ENCODE measurements at regions of chr1 and their contacts with region 1.

Region 1: GRCh38 chr1:229514578-229515275 is 6.6 kb upstream of the NUP133 start:
- DNase-seq: peak; percentile 35 to 85 (median 52)
- ATAC-seq: peak; percentile 100
- H3K4me3 ChIP-seq: no peak overlapping the region
- H3K4me3 Mint-ChIP-seq: no peak overlapping the region
- H3K27ac ChIP-seq: no peak overlapping the region
- H3K27ac Mint-ChIP-seq: peak overlapping the region; percentile 45
- H3K4me1 ChIP-seq: no peaks in the 10 kb centered on the region
- H3K4me1 Mint-ChIP-seq: peaks cover 7% of the 10 kb centered on the region
- H3K27me3 ChIP-seq: no peaks in the 10 kb centered on the region
- H3K27me3 Mint-ChIP-seq: no peaks in the 10 kb centered on the region
- CTCF ChIP-seq: peak; percentile 80

Region 2: GRCh38 chr1:229270547-229271447 is 243.9 kb before region 1 on chr1 and contains the start of gene RAB4A:
- CTCF ChIA-PET with region 1: no interaction called
- POLR2A ChIA-PET with region 1: no interaction called
- intact Hi-C with region 1: loop called (anchors 1 to 5 kb)
- DNase-seq: peak; percentile 38 to 90 (median 70)
- ATAC-seq: peak; percentile 87
- H3K4me3 ChIP-seq: peak within 1 kb of the TSS; percentile 80
- H3K4me3 Mint-ChIP-seq: peak within 1 kb of the TSS; percentile 99
- H3K27ac ChIP-seq: peak within 1 kb of the TSS in 1 of 2 donors; percentile 41
- H3K27ac Mint-ChIP-seq: peak within 1 kb of the TSS; percentile 77
- H3K4me1 ChIP-seq: peaks cover 34% of the 10 kb centered on the region
- H3K4me1 Mint-ChIP-seq: peaks cover 35% of the 10 kb centered on the region
- H3K27me3 ChIP-seq: no peaks in the 10 kb centered on the region
- H3K27me3 Mint-ChIP-seq: no peaks in the 10 kb centered on the region
- CTCF ChIP-seq: no peak
- total RNA-seq, gene RAB4A: 26.7 to 28.7 TPM

Region 3: GRCh38 chr1:229710746-229711145 is 196.0 kb after region 1 on chr1:
- CTCF ChIA-PET with region 1: no interaction called
- POLR2A ChIA-PET with region 1: no interaction called
- intact Hi-C with region 1: no loop called
- DNase-seq: no peak
- ATAC-seq: no peak
- H3K4me3 ChIP-seq: no peak overlapping the region
- H3K4me3 Mint-ChIP-seq: no peak overlapping the region
- H3K27ac ChIP-seq: no peak overlapping the region
- H3K27ac Mint-ChIP-seq: no peak overlapping the region
- H3K4me1 ChIP-seq: no peaks in the 10 kb centered on the region
- H3K4me1 Mint-ChIP-seq: no peaks in the 10 kb centered on the region
- H3K27me3 ChIP-seq: no peaks in the 10 kb centered on the region
- H3K27me3 Mint-ChIP-seq: peaks cover 5% of the 10 kb centered on the region
- CTCF ChIP-seq: no peak

Region 4: GRCh38 chr1:230310381-230311163 is 795.8 kb after region 1 on chr1:
- CTCF ChIA-PET with region 1: no interaction called
- POLR2A ChIA-PET with region 1: no interaction called
- intact Hi-C with region 1: loop called in 1 of 2 experiments (anchors 5 kb)
- DNase-seq: peak; percentile 23 to 83 (median 57)
- ATAC-seq: peak; percentile 59
- H3K4me3 ChIP-seq: no peak overlapping the region
- H3K4me3 Mint-ChIP-seq: no peak overlapping the region
- H3K27ac ChIP-seq: no peak overlapping the region
- H3K27ac Mint-ChIP-seq: no peak overlapping the region
- H3K4me1 ChIP-seq: peaks cover 5% of the 10 kb centered on the region
- H3K4me1 Mint-ChIP-seq: peaks cover 4% of the 10 kb centered on the region
- H3K27me3 ChIP-seq: no peaks in the 10 kb centered on the region
- H3K27me3 Mint-ChIP-seq: no peaks in the 10 kb centered on the region
- CTCF ChIP-seq: peak; percentile 98

Measured in CD4-positive, alpha-beta T cell (primary cell).